ENCODE measurements at regions of chr2 and their contacts with region 1.

Region 1: GRCh38 chr2:162196638-162197037 is 44.6 kb upstream of the GCG start:
- DNase-seq: no peak
- H3K4me3 ChIP-seq: no peak overlapping the region
- H3K27ac ChIP-seq: peak overlapping the region; percentile 87
- H3K27me3 ChIP-seq: no peaks in the 10 kb centered on the region
- CTCF ChIP-seq: no peak

Region 2: GRCh38 chr2:162072181-162072702 is 124.4 kb before region 1 on chr2:
- CTCF ChIA-PET with region 1: no interaction called
- POLR2A ChIA-PET with region 1: interaction called, 14 read pairs
- DNase-seq: peak; percentile 57
- H3K4me3 ChIP-seq: peak overlapping the region; percentile 76
- H3K27ac ChIP-seq: peak overlapping the region; percentile 47
- H3K27me3 ChIP-seq: no peaks in the 10 kb centered on the region
- CTCF ChIP-seq: no peak

Region 3: GRCh38 chr2:162092658-162093556 is 103.7 kb before region 1 on chr2:
- CTCF ChIA-PET with region 1: no interaction called
- POLR2A ChIA-PET with region 1: no interaction called
- DNase-seq: peak; percentile 80
- H3K4me3 ChIP-seq: no peak overlapping the region
- H3K27ac ChIP-seq: peak overlapping the region; percentile 82
- H3K27me3 ChIP-seq: no peaks in the 10 kb centered on the region
- CTCF ChIP-seq: no peak

Region 4: GRCh38 chr2:162210385-162210784 is 13.7 kb after region 1 on chr2:
- CTCF ChIA-PET with region 1: interaction called, 3 read pairs
- POLR2A ChIA-PET with region 1: interaction called, 14 read pairs
- DNase-seq: peak; percentile 44
- H3K4me3 ChIP-seq: no peak overlapping the region
- H3K27ac ChIP-seq: peak overlapping the region; percentile 0
- H3K27me3 ChIP-seq: no peaks in the 10 kb centered on the region
- CTCF ChIP-seq: no peak

Region 5: GRCh38 chr2:162243294-162243693 is 46.7 kb after region 1 on chr2 and contains the start of gene FAP:
- CTCF ChIA-PET with region 1: no interaction called
- POLR2A ChIA-PET with region 1: interaction called, 35 read pairs
- DNase-seq: peak; percentile 83
- H3K4me3 ChIP-seq: peak within 1 kb of the TSS; percentile 75
- H3K27ac ChIP-seq: peak within 1 kb of the TSS; percentile 90
- H3K27me3 ChIP-seq: no peaks in the 10 kb centered on the region
- CTCF ChIP-seq: no peak
- polyA plus RNA-seq, gene FAP: 300 and 374 TPM in 2 replicates

Measured in AG04450 (cell line).